ENCODE measurements at regions of chr1 and their contacts with region 1.

Region 1: DNA sequence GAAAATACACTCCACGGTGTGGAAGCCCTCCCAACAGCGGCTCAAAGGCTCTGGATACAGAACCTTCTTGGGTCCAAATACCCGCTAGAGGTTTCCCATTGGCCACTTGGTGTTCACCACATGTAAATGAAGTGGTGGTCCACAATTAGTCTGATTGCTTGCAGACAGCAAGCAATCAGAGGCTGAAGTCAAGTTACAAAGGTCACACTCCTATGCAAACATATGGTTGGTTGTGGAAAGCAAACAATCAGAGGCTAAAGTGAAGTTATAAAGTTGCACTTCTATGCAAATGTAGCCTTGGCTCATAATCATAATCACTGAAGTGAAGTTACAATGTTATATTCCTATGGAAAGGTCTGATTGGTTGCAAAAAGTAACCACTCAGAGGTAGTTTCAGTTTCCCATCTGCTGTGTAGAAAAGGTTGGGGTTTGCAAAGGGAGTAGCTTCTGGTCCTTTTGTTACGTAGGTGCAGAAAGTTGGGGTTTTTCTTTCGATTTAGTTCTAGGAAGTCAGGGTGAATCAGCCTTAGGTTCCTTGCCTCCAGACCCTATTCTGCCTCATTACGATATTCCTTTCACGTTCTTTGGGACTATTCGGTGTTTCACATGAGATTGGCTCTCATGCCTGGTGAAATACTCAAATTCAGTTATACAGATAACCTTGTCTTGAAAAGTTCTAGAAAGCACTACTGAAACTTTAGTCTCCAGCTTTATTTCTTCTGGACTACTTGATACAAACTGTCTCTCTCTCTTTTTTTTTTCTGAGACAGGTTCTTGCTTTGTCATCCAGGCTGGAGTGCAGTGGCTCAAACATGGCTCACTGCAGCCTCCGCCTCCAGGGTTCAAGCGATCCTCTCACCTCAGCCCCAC is 36.7 kb upstream of the MTF2 start:
- DNase-seq: peak; percentile 37
- H3K4me3 Mint-ChIP-seq: peak overlapping the region; percentile 71
- H3K27ac Mint-ChIP-seq: peak overlapping the region; percentile 92
- H3K4me1 Mint-ChIP-seq: peaks cover 34% of the 10 kb centered on the region
- H3K27me3 Mint-ChIP-seq: no peaks in the 10 kb centered on the region

Region 2: DNA sequence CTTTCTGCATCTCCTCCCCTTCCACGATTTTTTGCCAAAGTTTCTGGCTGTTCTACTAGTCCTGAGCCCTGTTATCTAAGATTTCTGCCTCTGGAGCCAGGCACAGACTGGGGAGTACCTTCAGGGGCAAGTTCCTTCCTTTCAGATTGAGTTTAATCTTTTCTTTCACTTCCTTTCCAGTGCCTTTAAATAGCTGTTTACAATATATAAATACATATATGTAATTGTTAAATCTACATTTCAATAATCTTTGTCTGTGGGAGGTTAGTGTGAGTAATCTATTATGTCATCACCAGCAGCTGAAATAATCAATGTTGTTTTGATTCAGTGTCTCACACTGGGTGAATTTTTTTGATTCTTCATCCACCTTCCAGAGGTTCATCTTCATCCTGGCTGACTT is 113.0 kb before region 1 on chr1:
- intact Hi-C with region 1: no loop called
- DNase-seq: no peak
- H3K4me3 Mint-ChIP-seq: no peak overlapping the region
- H3K27ac Mint-ChIP-seq: no peak overlapping the region
- H3K4me1 Mint-ChIP-seq: peaks cover 25% of the 10 kb centered on the region
- H3K27me3 Mint-ChIP-seq: no peaks in the 10 kb centered on the region

Region 3: GRCh38 chr1:93029317-93029716 is 13.1 kb before region 1 on chr1:
- intact Hi-C with region 1: loop called (anchors 2 kb)
- DNase-seq: peak; percentile 29
- H3K4me3 Mint-ChIP-seq: no peak overlapping the region
- H3K27ac Mint-ChIP-seq: no peak overlapping the region
- H3K4me1 Mint-ChIP-seq: peaks cover 28% of the 10 kb centered on the region
- H3K27me3 Mint-ChIP-seq: peaks cover 17% of the 10 kb centered on the region

Region 4: GRCh38 chr1:93056214-93056613 is 13.8 kb after region 1 on chr1:
- intact Hi-C with region 1: no loop called
- DNase-seq: no peak
- H3K4me3 Mint-ChIP-seq: no peak overlapping the region
- H3K27ac Mint-ChIP-seq: no peak overlapping the region
- H3K4me1 Mint-ChIP-seq: peaks cover 2% of the 10 kb centered on the region
- H3K27me3 Mint-ChIP-seq: peaks cover 32% of the 10 kb centered on the region

Region 5: DNA sequence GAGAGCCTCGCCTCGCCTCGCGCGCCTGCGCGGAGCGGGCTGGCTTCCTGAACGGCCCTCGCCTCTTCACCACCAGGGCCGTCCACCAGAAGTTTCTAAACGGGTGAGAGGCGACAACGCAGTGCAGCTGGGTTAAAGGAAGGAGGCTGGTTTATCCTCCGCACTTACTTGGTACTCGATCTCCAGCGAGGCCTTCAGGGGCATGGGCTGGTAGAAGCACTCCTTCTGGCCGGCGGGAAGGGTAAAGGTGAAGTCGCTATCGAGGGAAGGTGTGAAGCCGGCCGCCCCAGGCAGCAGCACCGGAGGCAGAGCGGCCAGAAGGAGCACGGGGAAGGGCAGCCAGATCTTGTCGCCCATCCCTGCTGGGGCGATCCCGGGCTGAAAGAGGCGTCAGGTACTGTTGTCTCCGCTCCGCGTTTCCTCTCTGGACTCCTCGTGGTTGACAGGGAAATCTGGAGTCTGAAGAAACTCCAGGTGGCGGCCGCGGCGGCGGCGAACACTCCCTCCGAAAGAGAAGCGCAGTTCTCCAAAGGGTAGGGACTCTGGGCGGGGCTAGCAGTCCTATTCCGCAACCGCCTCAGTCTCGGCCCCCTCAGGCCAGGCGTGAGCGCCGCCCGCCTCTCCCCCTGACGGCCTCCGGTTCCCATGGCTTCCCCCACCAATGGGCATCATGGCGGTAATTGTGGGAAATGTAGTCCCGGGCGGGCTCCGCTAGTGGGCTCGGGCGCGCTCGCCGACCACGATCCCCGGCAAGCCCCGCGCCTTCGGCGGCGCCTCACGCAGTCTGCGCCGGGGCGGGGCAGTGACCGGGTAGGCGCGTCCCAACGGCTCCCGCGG is 137.7 kb after region 1 on chr1 and contains the start of gene TMED5:
- intact Hi-C with region 1: loop called (anchors 1 kb)
- DNase-seq: peak; percentile 97
- H3K4me3 Mint-ChIP-seq: peak within 1 kb of the TSS; percentile 97
- H3K27ac Mint-ChIP-seq: peak within 1 kb of the TSS; percentile 99
- H3K4me1 Mint-ChIP-seq: peaks cover 52% of the 10 kb centered on the region
- H3K27me3 Mint-ChIP-seq: no peaks in the 10 kb centered on the region
- total RNA-seq, gene TMED5: 58.6 and 60.4 TPM in 2 replicates

Measured in activated T-helper 2 cell treated with anti-CD3 and anti-CD28 coated beads, Interferon-gamma antibody, Interleukin-2, Interleukin-4, amounts not matched to agents 10 μg/mL and 5 μg/mL and 100 μg/mL, durations not matched to agents 14 hours and 24 hours and 36 hours (primary cell).